ENCODE measurements at regions of chr20 and their contacts with region 1.

Region 1: DNA sequence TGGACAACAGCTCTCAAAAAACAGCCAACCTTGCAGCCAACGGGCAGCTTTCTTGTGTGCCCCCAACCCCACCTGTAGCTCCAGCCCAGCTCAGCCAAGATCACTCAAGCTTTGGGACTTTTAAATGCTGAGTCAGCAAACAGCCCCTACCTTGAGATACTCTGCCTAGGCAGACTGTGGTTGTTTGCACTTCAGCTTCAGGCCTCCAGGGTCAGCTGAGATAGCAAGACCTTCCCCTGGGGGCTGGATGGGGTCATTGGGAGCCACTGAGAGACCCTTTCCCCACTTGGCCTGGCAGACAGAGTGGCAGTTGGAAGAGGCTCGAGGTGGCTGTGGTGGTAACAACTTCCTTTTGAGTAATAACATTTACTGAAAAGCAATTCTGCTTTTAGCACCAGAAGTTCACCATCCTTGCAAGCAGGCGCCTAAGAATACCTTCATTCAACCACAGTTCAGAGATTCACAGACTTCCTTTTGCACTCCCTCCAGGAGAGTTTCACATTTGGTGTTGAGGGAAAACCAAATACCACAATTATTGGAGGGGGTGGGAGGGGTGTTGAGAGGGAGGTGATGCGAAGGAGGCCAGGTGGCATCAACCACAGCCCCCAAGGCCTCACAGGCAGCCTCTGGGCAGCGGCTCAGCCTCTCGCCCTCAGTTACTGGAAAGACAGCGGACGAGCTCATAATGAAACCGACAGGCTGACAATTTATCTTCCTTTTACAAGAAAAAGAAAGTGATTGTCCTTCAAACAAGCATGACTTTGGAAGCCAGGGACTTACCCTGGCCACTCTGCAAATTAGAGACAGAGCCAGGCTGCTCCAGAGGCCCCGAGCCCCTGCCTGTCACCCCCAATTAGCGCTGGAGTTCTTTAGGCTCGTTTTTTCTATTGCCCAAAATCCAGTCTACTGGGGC is 148.1 kb downstream of the CEBPB start:
- DNase-seq: peak; percentile 73
- H3K4me3 Mint-ChIP-seq: peak overlapping the region; percentile 74
- H3K27ac Mint-ChIP-seq: peak overlapping the region; percentile 89
- H3K4me1 Mint-ChIP-seq: peaks cover 75% of the 10 kb centered on the region
- H3K27me3 Mint-ChIP-seq: peaks cover 5% of the 10 kb centered on the region

Region 2: DNA sequence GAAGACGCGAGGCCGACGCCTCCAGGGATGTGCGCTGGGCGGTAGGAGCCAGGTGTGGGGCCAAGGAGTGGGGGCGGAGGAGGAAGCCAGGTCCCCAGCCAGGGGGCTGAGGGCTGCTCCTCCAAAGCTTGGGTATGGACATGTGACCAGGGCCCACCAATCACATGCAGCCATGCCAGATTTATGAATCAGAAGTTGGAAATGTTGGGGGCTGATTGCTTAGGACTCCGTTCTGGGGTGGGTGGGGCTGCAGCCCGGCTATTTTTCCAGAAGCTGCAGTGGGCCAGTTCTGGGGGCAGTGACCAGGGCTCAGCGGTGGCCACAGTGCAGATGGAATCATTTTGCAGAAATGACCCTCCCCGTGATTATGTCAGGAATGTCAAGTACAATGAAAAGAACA is 52.1 kb before region 1 on chr20:
- intact Hi-C with region 1: loop called (anchors 1 kb)
- DNase-seq: no peak
- H3K4me3 Mint-ChIP-seq: no peak overlapping the region
- H3K27ac Mint-ChIP-seq: no peak overlapping the region
- H3K4me1 Mint-ChIP-seq: peaks cover 31% of the 10 kb centered on the region
- H3K27me3 Mint-ChIP-seq: peaks cover 3% of the 10 kb centered on the region

Region 3: DNA sequence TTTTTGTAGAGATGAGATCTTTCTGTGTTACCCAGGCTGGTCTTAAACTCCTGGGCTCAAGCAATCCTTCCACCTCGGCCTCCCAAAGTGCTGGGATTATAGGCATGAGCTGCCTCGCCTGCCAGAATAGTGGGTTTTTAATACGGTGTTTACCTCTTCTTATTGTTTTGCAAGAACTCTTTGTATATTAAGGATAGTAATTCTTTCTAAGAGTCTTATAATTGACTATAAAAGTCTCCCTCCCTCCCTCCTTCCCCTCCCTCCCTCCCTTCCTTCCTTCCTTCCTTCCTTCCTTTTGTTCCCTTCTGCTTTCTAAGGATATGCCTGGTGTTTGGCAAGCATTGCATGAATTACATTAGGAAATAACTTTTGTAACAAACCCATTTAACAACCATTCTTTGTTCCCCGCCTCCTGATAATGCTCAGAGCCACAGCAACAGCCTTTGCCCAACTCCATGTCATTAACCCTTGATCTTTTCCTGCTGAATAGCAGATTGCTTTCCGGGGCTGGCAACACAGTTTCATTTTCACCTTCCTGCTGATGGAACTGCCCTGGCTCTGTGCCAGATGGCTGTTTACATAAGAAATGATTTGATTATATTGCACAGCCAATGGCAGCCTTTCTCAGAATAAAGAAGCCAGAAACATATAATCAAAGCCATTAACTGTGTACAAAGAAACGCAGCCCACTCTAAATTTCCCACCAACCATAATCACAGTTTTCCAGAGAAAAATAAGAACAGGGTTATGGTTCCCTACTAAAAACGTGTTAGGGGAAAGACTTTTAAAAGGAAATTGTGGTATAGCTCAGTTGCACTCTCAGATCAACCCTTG is 27.8 kb after region 1 on chr20:
- intact Hi-C with region 1: loop called (anchors 2 kb)
- DNase-seq: peak; percentile 48
- H3K4me3 Mint-ChIP-seq: peak overlapping the region; percentile 9
- H3K27ac Mint-ChIP-seq: no peak overlapping the region
- H3K4me1 Mint-ChIP-seq: peaks cover 24% of the 10 kb centered on the region
- H3K27me3 Mint-ChIP-seq: peaks cover 7% of the 10 kb centered on the region

Region 4: DNA sequence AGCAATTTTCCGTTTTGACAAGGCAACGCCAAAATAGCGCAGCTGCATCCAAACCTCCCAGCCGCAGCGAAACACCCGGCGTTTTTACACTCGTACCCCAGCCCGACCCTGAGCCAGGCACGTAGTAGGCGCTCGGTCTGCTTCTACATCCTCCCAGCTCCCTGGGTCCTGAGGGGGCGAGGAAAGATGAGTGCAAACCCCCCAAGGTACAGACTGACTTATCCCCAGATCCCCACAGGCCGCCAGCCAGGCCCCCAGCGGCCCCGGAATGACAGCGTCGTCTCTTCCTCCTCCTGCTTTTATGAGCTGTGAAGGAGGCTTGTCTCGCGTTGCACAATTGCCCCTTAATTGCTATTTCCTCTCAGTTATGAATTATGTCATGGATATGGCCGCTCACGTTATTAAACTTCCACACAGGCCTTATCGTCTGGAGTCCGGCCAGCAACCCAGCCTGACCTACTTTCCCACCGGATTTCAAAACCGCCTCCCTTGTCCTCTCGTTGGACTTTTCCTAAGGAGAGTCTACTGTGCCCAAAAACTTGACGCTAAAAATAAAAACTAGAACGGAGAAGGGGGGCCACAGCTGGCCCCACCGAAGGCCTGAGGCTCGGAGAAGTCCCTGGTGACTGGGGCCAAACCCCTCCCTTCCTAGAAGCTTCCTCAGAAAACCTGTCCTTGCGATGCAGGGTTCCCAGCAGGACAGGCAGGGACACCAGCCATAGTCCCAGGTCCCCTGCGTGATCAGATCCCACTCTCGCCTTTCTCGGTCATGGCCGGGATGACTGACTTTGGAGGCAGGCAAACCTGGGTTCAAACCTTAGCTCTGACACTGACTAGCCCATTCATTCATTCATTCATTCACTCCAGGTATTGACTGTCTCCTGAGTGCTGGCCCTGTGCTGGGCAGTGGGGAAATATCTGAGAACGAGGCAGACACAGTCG is 40.6 kb after region 1 on chr20:
- intact Hi-C with region 1: no loop called
- DNase-seq: no peak
- H3K4me3 Mint-ChIP-seq: no peak overlapping the region
- H3K27ac Mint-ChIP-seq: no peak overlapping the region
- H3K4me1 Mint-ChIP-seq: peaks cover 50% of the 10 kb centered on the region
- H3K27me3 Mint-ChIP-seq: peaks cover 2% of the 10 kb centered on the region

Region 5: DNA sequence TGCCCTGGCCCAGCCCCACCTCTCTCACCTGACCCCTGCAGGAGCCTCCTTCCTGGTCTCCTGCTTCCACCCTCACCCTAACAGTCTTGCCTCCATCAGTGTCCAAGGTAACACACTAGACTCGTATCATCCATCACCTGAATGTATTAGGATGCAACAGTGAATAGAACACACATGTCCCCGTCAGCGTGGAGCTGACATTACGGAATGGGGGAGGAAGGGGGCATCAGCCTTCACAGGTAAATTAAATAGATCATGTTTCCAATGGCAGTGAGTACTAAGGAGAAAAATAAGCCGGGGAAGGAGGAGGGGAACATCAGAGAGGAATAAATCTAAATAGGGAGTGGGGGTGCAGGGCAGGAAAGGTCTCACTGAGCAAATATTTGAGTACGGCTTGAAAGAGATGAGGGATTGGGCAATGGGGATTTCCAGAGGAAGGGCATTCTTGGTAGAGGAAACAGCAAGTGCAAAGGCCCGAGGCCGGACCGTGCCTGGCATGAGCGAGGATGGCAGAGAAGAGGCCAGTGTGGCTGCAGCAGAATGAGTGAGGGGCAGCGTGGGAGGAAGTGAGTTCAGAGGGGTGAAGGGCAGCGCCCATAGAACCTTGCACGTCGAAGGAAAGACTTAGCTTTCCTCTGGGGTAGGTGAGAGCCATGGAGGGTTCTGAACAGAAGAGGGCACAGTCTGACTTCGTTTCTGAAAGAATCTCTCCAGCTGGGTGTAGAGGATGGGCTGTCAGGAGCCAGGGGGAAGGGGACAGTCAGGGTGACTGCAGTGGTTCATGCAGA is 61.4 kb after region 1 on chr20:
- intact Hi-C with region 1: no loop called
- DNase-seq: no peak
- H3K4me3 Mint-ChIP-seq: no peak overlapping the region
- H3K27ac Mint-ChIP-seq: peak overlapping the region; percentile 22
- H3K4me1 Mint-ChIP-seq: no peaks in the 10 kb centered on the region
- H3K27me3 Mint-ChIP-seq: peaks cover 14% of the 10 kb centered on the region

Region 6: GRCh38 chr20:50439539-50440453 is 101.1 kb after region 1 on chr20:
- intact Hi-C with region 1: loop called (anchors 1 kb)
- DNase-seq: no peak
- H3K4me3 Mint-ChIP-seq: no peak overlapping the region
- H3K27ac Mint-ChIP-seq: peak overlapping the region; percentile 96
- H3K4me1 Mint-ChIP-seq: peaks cover 18% of the 10 kb centered on the region
- H3K27me3 Mint-ChIP-seq: no peaks in the 10 kb centered on the region

Region 7: GRCh38 chr20:50561379-50562078 is 222.8 kb after region 1 on chr20:
- intact Hi-C with region 1: loop called (anchors 2 kb)
- DNase-seq: peak; percentile 32
- H3K4me3 Mint-ChIP-seq: peak overlapping the region; percentile 87
- H3K27ac Mint-ChIP-seq: peak overlapping the region; percentile 98
- H3K4me1 Mint-ChIP-seq: peaks cover 62% of the 10 kb centered on the region
- H3K27me3 Mint-ChIP-seq: no peaks in the 10 kb centered on the region

Region 8: DNA sequence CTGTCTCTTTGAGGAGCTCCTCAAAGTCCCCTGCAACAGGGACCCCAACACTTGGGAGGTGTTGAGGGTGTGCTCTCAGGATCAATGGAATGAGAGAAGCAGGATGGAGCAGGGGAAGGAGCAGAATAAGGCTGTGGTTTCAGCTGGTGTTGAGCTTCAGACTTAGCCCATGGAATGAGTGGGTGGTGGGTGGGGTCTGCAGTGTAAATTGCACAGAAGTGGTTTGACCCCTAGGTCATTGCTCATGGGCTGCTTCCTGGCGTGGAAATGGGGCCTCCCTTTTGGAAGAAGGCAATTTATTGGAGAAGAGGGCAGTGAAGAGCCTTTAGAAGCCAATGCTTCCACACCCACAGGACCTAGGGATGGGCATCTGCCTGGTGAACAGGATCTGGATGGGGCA is 721.1 kb after region 1 on chr20:
- intact Hi-C with region 1: loop called (anchors 5 kb)
- DNase-seq: no peak
- H3K4me3 Mint-ChIP-seq: no peak overlapping the region
- H3K27ac Mint-ChIP-seq: no peak overlapping the region
- H3K4me1 Mint-ChIP-seq: peaks cover 32% of the 10 kb centered on the region
- H3K27me3 Mint-ChIP-seq: peaks cover 10% of the 10 kb centered on the region